ENCODE measurements at regions of chr20 and their contacts with region 1.

Region 1: DNA sequence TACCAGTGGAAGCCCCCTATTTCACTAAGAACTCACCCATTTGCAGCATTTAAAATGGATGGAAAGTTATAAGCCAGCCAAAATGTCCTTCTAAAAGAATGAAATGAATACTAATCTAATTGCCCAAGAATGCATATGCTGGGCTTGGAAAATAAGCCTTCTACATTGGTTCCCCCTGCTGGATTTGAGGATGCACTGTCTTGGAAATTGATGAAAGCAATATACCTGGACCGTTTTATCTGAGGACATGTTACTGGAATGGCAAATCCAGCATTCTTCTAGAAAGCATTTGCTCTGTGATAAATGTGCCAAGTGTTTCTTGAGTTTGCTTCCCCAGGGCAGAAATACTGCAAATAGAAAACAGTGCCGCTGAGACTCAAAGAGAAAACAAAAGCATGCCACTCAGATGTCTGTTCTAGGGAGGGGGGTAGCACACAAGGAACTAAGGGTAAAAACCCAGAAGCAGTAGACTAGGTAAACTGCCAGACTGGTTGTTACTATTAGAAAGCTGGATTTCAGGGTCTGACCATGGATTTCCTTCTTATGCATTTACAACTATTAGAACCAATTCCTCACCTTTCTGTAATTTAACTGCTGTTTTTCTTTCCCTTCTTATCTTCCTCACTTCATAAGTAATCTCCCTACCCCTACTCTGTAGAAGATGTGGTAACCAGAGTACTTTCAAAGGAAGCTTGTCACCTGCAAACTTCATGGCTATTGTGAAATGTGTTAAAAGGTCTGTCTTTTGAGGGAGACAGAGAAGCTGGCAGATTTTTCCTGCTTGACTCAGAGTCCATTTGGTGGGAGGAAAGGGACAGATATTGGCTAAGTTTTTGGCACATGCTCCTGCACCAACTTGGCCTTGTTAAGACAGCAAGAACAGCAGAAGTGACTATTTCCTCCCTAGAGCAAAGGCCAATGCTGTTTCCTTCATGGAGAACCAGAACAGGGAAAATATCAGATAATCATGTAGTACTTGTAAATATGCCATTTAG is 642.6 kb downstream of the KIF16B start:
- DNase-seq: no peak
- H3K4me3 ChIP-seq: no peak overlapping the region
- H3K27ac ChIP-seq: no peak overlapping the region
- H3K4me1 ChIP-seq: no peaks in the 10 kb centered on the region
- H3K27me3 ChIP-seq: no peaks in the 10 kb centered on the region
- CTCF ChIP-seq: peak in 4 of 5 experiments; percentile 34 to 44 (median 38)
- EP300 ChIP-seq: no peak
- POLR2A ChIP-seq: no peak

Region 2: DNA sequence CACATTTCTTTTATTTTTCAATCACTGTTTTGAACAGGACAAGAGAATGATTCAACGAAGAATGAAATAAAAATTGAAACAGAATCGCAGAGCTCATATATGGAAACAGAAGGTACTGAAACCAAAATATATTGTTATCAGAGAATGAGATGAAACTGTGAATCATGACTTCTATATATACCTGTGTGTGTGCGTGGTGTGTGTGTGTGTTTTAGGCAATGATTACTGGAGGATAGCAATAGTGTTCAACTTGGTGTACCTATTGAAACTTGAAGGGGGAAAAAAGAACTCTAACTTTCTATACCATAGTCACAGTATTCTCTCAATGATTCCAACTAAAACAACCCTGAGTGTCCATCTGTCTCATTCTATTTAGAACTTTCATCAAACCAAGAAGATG is 56.1 kb after region 1 on chr20:
- in situ Hi-C with region 1: no loop called
- intact Hi-C with region 1: no loop called
- DNase-seq: no peak
- H3K4me3 ChIP-seq: no peak overlapping the region
- H3K27ac ChIP-seq: no peak overlapping the region
- H3K4me1 ChIP-seq: no peaks in the 10 kb centered on the region
- H3K27me3 ChIP-seq: no peaks in the 10 kb centered on the region
- CTCF ChIP-seq: no peak
- EP300 ChIP-seq: no peak
- POLR2A ChIP-seq: no peak

Region 3: DNA sequence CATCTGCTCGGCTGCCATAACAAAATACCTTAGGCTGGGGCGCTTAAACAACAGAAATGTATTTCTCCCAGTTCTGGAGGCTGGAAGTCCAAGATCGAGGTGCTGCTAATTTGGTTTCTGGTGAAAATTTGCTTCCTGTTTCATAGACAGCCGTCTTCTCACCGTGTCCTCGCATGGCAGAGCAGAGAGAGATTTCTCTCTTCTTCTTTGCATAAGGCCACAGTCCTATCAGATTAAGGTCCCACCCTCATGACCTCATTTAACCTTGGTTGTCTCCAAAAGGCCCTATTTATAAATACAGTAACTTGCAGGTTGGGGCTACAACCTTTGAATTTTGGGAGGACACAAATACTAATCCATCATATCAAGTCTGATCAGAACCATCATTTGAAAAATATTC is 98.3 kb after region 1 on chr20:
- in situ Hi-C with region 1: loop called in 1 of 4 experiments (anchors 25 kb)
- intact Hi-C with region 1: no loop called
- DNase-seq: no peak
- H3K4me3 ChIP-seq: no peak overlapping the region
- H3K27ac ChIP-seq: no peak overlapping the region
- H3K4me1 ChIP-seq: no peaks in the 10 kb centered on the region
- H3K27me3 ChIP-seq: no peaks in the 10 kb centered on the region
- CTCF ChIP-seq: no peak
- EP300 ChIP-seq: no peak
- POLR2A ChIP-seq: no peak